IMR-90 (cell line): ENCODE measurements at regions of chr6 and their contacts with region 1.

Region 1: GRCh38 chr6:17281100-17281494 is at the start of gene RBM24:
- DNase-seq: peak; percentile 79
- ATAC-seq: peak; percentile 73
- H3K4me3 ChIP-seq: peak within 1 kb of the TSS; percentile 98
- H3K27ac ChIP-seq: peak within 1 kb of the TSS; percentile 79
- H3K4me1 ChIP-seq: peaks cover 16% of the 10 kb centered on the region
- H3K27me3 ChIP-seq: no peaks in the 10 kb centered on the region
- CTCF ChIP-seq: peak; percentile 53
- POLR2A ChIP-seq: no peak
- RAD21 ChIP-seq: peak; percentile 45
- total RNA-seq, gene RBM24: 4.1 and 6.7 TPM in 2 replicates

Region 2: DNA sequence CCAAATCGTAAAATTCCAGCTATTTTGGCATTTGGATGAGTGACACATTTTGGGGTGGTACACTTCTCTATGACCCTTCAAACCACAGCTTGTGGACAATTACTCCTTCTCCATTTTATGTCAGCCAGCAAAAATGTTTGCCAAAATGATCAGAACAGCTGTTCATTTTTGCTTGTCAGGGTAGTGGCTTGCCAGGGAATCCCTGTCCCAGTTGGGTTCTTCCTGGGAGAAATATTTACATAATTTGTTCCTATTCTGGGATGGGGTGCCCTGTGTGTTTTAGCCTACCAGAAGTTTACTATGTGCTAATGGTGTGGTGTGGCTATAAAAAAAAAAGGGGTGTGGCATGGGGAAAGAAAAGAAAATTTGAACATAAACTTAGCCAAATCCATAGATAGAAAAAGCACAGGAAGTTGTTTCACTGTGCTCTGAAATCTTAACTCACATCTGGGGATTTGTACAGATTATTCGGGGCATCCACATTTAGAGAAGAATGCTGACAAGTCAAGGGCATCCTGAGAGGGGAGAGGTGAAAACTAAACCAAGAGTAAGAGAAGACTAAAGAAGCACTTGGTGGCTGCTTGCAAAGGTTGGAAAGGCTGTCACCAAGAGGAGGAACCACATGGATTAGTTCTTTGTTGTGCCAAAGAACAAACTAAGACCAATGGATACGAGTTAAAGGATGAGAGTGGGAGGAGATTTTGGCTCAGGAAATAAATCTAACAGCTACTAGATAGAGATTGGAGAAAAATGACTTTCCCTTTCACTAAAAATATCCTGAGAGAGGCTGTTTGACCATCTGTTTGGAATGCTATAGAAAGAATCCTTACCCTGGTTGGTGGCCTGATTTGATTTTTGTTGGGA is 55.1 kb before region 1 on chr6:
- CTCF ChIA-PET with region 1: no interaction called
- POLR2A ChIA-PET with region 1: no interaction called
- dilution Hi-C with region 1: no loop called
- in situ Hi-C with region 1: no loop called
- intact Hi-C with region 1: no loop called
- DNase-seq: no peak
- ATAC-seq: no peak
- H3K4me3 ChIP-seq: no peak overlapping the region
- H3K27ac ChIP-seq: no peak overlapping the region
- H3K4me1 ChIP-seq: peaks cover 3% of the 10 kb centered on the region; the same call in 1 of the 2 replicates
- H3K27me3 ChIP-seq: no peaks in the 10 kb centered on the region; the same call in 1 of the 2 replicates
- CTCF ChIP-seq: no peak
- POLR2A ChIP-seq: no peak
- RAD21 ChIP-seq: no peak

Region 3: DNA sequence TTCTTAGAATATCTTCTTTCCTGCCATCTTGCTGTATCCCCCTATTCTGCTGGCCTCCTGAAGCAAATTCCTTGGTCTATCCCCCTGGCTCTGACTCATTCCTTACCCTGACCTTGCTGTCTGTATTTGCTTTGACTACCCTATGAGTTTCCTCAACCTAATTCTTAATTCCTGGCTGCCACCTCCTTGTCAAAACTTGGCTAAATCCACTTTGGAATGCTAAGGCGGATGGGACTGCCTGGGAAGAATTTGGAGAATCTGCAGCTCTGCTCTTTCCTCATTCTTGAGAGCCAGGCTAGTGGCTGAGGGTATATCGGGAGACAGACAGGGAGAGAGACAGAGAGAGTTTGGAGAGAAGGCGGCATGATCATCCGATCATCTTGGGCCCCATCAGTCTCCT is 136.7 kb after region 1 on chr6:
- CTCF ChIA-PET with region 1: interaction called, 5 read pairs
- POLR2A ChIA-PET with region 1: no interaction called
- dilution Hi-C with region 1: no loop called
- in situ Hi-C with region 1: no loop called
- intact Hi-C with region 1: loop called (anchors 2 kb)
- DNase-seq: peak; percentile 91
- ATAC-seq: peak; percentile 76
- H3K4me3 ChIP-seq: peak overlapping the region; percentile 9; the same call in 1 of the 2 replicates
- H3K27ac ChIP-seq: peak overlapping the region; percentile 86
- H3K4me1 ChIP-seq: peaks cover 21% of the 10 kb centered on the region
- H3K27me3 ChIP-seq: no peaks in the 10 kb centered on the region
- CTCF ChIP-seq: no peak
- POLR2A ChIP-seq: peak; percentile 68; the same call in 1 of the 2 replicates
- RAD21 ChIP-seq: no peak

Region 4: GRCh38 chr6:17584241-17584803 is 303.2 kb after region 1 on chr6:
- CTCF ChIA-PET with region 1: interaction called, 3 read pairs
- POLR2A ChIA-PET with region 1: no interaction called
- dilution Hi-C with region 1: no loop called
- in situ Hi-C with region 1: loop called (anchors 10 kb)
- intact Hi-C with region 1: loop called (anchors 1 kb)
- DNase-seq: peak; percentile 86
- ATAC-seq: peak; percentile 91
- H3K4me3 ChIP-seq: no peak overlapping the region
- H3K27ac ChIP-seq: no peak overlapping the region
- H3K4me1 ChIP-seq: peaks cover 2% of the 10 kb centered on the region; the same call in 1 of the 2 replicates
- H3K27me3 ChIP-seq: no peaks in the 10 kb centered on the region
- CTCF ChIP-seq: peak; percentile 79
- POLR2A ChIP-seq: no peak
- RAD21 ChIP-seq: peak; percentile 83

Region 5: GRCh38 chr6:17714879-17715851 is 434.1 kb after region 1 on chr6:
- CTCF ChIA-PET with region 1: no interaction called
- POLR2A ChIA-PET with region 1: no interaction called
- dilution Hi-C with region 1: no loop called
- in situ Hi-C with region 1: no loop called
- intact Hi-C with region 1: no loop called
- DNase-seq: peak; percentile 98
- ATAC-seq: peak; percentile 59
- H3K4me3 ChIP-seq: no peak overlapping the region
- H3K27ac ChIP-seq: peak overlapping the region; percentile 76
- H3K4me1 ChIP-seq: peaks cover 14% of the 10 kb centered on the region
- H3K27me3 ChIP-seq: no peaks in the 10 kb centered on the region
- CTCF ChIP-seq: no peak
- POLR2A ChIP-seq: no peak
- RAD21 ChIP-seq: no peak